Activated CD8-positive, alpha-beta T cell treated with anti-CD3 and anti-CD28 coated beads, Interleukin-2, amount 10 ng/mL, durations not matched to agents 7 days and 5 days (primary cell): ENCODE measurements at regions of chr12 and their contacts with region 1.

Region 1: GRCh38 chr12:50111693-50112455 is at the start of gene COX14:
- DNase-seq: peak; percentile 99
- ATAC-seq: peak; percentile 91
- H3K4me3 Mint-ChIP-seq: peak within 1 kb of the TSS; percentile 95
- H3K27ac Mint-ChIP-seq: peak within 1 kb of the TSS; percentile 99
- H3K4me1 Mint-ChIP-seq: peaks cover 39% of the 10 kb centered on the region
- H3K27me3 Mint-ChIP-seq: no peaks in the 10 kb centered on the region
- total RNA-seq, gene COX14: 50.0 to 51.6 TPM

Region 2: GRCh38 chr12:49740930-49741881 is 370.7 kb before region 1 on chr12 and contains the start of gene TMBIM6:
- CTCF ChIA-PET with region 1: no interaction called
- POLR2A ChIA-PET with region 1: interaction called, 10 read pairs
- DNase-seq: peak; percentile 100
- ATAC-seq: peak; percentile 94
- H3K4me3 Mint-ChIP-seq: peak within 1 kb of the TSS; percentile 85
- H3K27ac Mint-ChIP-seq: peak within 1 kb of the TSS; percentile 97
- H3K4me1 Mint-ChIP-seq: peaks cover 28% of the 10 kb centered on the region
- H3K27me3 Mint-ChIP-seq: no peaks in the 10 kb centered on the region
- total RNA-seq, gene TMBIM6: 420 TPM

Region 3: DNA sequence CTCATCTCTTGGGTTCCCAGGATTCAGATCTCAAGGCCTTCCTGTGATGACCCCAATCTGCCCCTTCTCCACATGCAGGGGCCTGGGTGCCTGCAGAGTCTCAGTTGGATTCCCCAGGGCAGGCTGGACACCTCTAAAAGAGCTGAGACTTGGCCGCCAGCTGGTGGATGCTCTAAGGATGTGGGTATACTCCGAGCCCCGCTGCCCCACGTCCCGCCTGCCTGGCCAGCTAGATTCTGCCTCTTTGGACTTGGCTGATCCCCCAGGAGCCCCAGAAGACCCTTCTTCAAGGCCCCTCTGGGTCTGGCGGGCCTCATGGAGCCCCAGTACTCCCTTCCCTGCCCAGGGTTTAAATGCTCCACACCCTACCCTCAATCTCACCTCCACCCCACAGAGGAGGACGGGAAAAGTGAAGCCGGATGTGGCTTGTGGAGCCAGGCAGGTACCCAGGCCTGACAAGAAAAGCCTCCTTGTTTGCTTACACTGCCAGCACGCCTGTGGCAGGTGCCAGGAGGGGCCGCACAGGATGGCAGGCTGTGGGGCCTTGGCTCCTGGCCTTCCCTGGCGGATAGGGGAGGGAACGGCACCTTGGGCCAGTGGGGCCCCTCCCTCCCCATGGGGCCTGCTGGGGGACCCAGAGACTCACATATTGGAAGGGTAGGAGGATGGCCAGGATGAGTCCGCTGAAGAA is 223.3 kb before region 1 on chr12:
- CTCF ChIA-PET with region 1: no interaction called
- POLR2A ChIA-PET with region 1: no interaction called
- DNase-seq: no peak
- ATAC-seq: no peak
- H3K4me3 Mint-ChIP-seq: no peak overlapping the region
- H3K27ac Mint-ChIP-seq: no peak overlapping the region
- H3K4me1 Mint-ChIP-seq: no peaks in the 10 kb centered on the region
- H3K27me3 Mint-ChIP-seq: peaks cover 13% of the 10 kb centered on the region

Region 4: GRCh38 chr12:50025187-50026059 is 86.5 kb before region 1 on chr12 and contains the start of gene RACGAP1:
- CTCF ChIA-PET with region 1: interaction called, 6 read pairs
- POLR2A ChIA-PET with region 1: interaction called, 12 read pairs
- DNase-seq: peak; percentile 98
- ATAC-seq: peak; percentile 98
- H3K4me3 Mint-ChIP-seq: peak within 1 kb of the TSS; percentile 94
- H3K27ac Mint-ChIP-seq: peak within 1 kb of the TSS; percentile 98
- H3K4me1 Mint-ChIP-seq: peaks cover 39% of the 10 kb centered on the region
- H3K27me3 Mint-ChIP-seq: no peaks in the 10 kb centered on the region
- total RNA-seq, gene RACGAP1: 185 to 200 TPM

Region 5: DNA sequence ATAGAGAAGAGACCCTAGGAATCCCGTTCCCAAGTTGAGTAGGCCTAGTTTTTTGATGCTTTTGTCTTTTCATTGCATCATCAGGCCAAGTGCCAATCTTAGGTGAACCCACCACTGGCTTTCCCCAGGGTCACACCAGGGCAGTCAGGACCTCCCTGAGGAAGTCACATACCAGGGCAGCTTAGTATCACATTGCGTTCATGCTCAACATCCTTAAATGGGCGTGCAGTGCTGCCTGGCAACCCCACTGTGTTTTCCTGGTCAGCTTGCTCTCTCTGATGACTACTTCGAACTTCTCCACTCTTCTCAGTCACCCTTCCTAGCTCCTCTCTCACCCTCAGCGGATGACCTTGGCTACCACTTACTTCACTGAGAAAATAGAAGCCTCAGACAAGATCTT is 45.4 kb before region 1 on chr12:
- CTCF ChIA-PET with region 1: interaction called, 17 read pairs
- POLR2A ChIA-PET with region 1: no interaction called
- DNase-seq: no peak
- ATAC-seq: no peak
- H3K4me3 Mint-ChIP-seq: no peak overlapping the region
- H3K27ac Mint-ChIP-seq: no peak overlapping the region
- H3K4me1 Mint-ChIP-seq: peaks cover 27% of the 10 kb centered on the region
- H3K27me3 Mint-ChIP-seq: no peaks in the 10 kb centered on the region

Region 6: DNA sequence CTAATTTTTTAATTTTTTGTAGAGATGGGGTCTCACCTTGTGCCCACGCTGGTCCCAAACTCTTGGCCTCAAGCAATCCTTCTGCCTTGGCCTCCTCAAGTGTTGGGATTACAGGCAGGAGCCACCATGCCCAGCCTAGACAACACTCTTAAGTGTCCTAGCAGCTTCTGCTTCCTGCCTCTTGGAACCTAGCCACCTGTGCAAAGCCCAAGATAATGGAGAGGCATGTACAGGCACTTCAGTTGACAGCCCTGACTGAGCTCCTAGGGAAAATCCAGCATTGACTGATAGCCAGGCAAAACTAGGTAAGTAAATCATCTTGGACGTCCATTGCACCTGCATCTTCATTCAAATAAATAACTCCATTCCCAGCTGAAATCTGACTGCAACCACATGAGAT is 15.7 kb after region 1 on chr12:
- CTCF ChIA-PET with region 1: interaction called, 114 read pairs
- POLR2A ChIA-PET with region 1: interaction called, 27 read pairs
- DNase-seq: no peak
- ATAC-seq: no peak
- H3K4me3 Mint-ChIP-seq: no peak overlapping the region
- H3K27ac Mint-ChIP-seq: no peak overlapping the region
- H3K4me1 Mint-ChIP-seq: peaks cover 17% of the 10 kb centered on the region
- H3K27me3 Mint-ChIP-seq: no peaks in the 10 kb centered on the region

Region 7: GRCh38 chr12:50174971-50175715 is 63.3 kb after region 1 on chr12:
- CTCF ChIA-PET with region 1: interaction called, 141 read pairs
- POLR2A ChIA-PET with region 1: interaction called, 3 read pairs
- DNase-seq: peak; percentile 39
- ATAC-seq: no peak
- H3K4me3 Mint-ChIP-seq: no peak overlapping the region
- H3K27ac Mint-ChIP-seq: no peak overlapping the region
- H3K4me1 Mint-ChIP-seq: peaks cover 2% of the 10 kb centered on the region
- H3K27me3 Mint-ChIP-seq: no peaks in the 10 kb centered on the region

Region 8: GRCh38 chr12:50222275-50222795 is 110.5 kb after region 1 on chr12:
- CTCF ChIA-PET with region 1: interaction called, 19 read pairs
- POLR2A ChIA-PET with region 1: interaction called, 3 read pairs
- DNase-seq: peak; percentile 40
- ATAC-seq: peak; percentile 60
- H3K4me3 Mint-ChIP-seq: no peak overlapping the region
- H3K27ac Mint-ChIP-seq: no peak overlapping the region
- H3K4me1 Mint-ChIP-seq: peaks cover 23% of the 10 kb centered on the region
- H3K27me3 Mint-ChIP-seq: no peaks in the 10 kb centered on the region